ENCODE measurements at regions of chr14 and their contacts with region 1.

Region 1: DNA sequence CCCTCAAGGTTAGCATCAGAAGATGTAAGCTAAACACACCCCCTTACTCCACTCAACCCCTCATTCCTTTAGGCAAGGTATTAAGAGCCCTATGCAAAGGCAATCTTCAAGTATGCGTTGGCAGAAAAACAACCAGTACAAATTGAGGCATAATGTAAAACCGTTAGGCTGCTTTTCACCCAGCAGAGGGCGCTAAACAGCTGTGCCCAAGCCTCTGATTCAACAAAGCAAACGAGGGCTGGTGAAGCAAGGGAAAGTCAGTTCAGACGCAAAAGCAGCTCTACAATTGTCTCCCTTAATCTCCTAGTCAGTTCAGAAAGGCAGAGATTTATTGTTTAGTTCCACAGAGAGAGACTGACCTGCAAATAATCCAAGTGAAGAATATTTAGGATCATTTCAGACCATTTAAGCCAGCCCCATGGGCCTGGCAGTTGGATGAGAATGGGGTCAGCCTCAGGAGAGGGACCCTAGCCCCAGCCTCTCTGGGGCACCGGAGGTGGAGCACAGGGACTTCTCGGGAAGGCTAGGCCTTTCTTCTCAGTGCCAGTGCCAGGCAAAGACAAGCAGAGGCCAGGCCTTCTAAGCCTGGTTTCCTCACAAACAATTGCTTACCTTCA is 23.5 kb downstream of the DCAF5 start:
- DNase-seq: peak; percentile 49
- H3K4me3 Mint-ChIP-seq: no peak overlapping the region
- H3K27ac Mint-ChIP-seq: no peak overlapping the region
- H3K4me1 Mint-ChIP-seq: peaks cover 33% of the 10 kb centered on the region
- H3K27me3 Mint-ChIP-seq: no peaks in the 10 kb centered on the region

Region 2: GRCh38 chr14:68762953-68763764 is 366.2 kb before region 1 on chr14:
- intact Hi-C with region 1: no loop called
- DNase-seq: no peak
- H3K4me3 Mint-ChIP-seq: no peak overlapping the region
- H3K27ac Mint-ChIP-seq: no peak overlapping the region
- H3K4me1 Mint-ChIP-seq: peaks cover 14% of the 10 kb centered on the region
- H3K27me3 Mint-ChIP-seq: no peaks in the 10 kb centered on the region

Region 3: GRCh38 chr14:69191340-69192111 is 62.2 kb after region 1 on chr14 and contains the start of gene EXD2:
- intact Hi-C with region 1: loop called (anchors 2 kb)
- DNase-seq: peak; percentile 55
- H3K4me3 Mint-ChIP-seq: peak within 1 kb of the TSS; percentile 88
- H3K27ac Mint-ChIP-seq: peak within 1 kb of the TSS; percentile 75
- H3K4me1 Mint-ChIP-seq: peaks cover 19% of the 10 kb centered on the region
- H3K27me3 Mint-ChIP-seq: peaks cover 9% of the 10 kb centered on the region
- total RNA-seq, gene EXD2: 6.6 and 8.1 TPM in 2 replicates

Region 4: GRCh38 chr14:69242311-69243224 is 113.2 kb after region 1 on chr14:
- intact Hi-C with region 1: loop called (anchors 5 kb)
- DNase-seq: peak; percentile 28
- H3K4me3 Mint-ChIP-seq: no peak overlapping the region
- H3K27ac Mint-ChIP-seq: no peak overlapping the region
- H3K4me1 Mint-ChIP-seq: peaks cover 1% of the 10 kb centered on the region
- H3K27me3 Mint-ChIP-seq: no peaks in the 10 kb centered on the region

Region 5: GRCh38 chr14:69460093-69460701 is 330.8 kb after region 1 on chr14:
- intact Hi-C with region 1: loop called (anchors 10 kb)
- DNase-seq: peak; percentile 40
- H3K4me3 Mint-ChIP-seq: no peak overlapping the region
- H3K27ac Mint-ChIP-seq: no peak overlapping the region
- H3K4me1 Mint-ChIP-seq: no peaks in the 10 kb centered on the region
- H3K27me3 Mint-ChIP-seq: no peaks in the 10 kb centered on the region